ENCODE measurements at regions of chr3 and their contacts with region 1.

Region 1: GRCh38 chr3:141738022-141738890 is at the start of gene RNF7:
- DNase-seq: peak; percentile 96
- ATAC-seq: peak; percentile 97
- total RNA-seq, gene RNF7: 82.6 TPM

Region 2: DNA sequence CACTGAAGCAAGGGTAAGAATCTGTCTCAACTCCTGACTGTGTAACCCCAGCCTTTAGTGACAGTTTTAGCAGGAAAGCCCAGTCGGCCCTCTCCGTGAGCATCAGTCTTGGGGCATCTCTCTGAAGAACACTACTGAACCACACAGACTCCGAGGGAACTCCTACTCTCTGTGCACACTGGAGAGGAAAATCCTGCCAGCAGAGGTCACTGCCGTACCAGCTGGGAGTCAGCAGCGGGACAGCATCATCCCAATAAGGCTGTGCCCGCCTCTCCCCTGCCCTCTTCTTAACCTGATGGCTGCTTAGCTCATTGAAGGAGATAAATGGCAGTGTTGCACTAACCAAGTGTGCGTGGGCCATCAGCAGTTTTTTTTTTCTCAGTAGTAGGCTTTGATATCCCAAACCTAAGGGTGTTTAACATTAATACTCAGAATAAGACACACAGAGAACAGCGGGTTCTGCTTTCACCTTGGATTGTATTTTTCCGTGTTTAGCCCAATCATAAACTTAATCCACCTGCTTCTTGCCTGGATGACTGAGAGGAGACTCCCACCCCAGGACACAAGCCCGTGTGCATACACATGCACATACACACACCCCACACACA is 278.1 kb before region 1 on chr3:
- intact Hi-C with region 1: no loop called
- DNase-seq: peak; percentile 92
- ATAC-seq: peak; percentile 95

Region 3: GRCh38 chr3:141575879-141576743 is 162.1 kb before region 1 on chr3:
- intact Hi-C with region 1: loop called (anchors 10 kb)
- DNase-seq: no peak
- ATAC-seq: no peak

Region 4: GRCh38 chr3:141659821-141660613 is 78.2 kb before region 1 on chr3:
- intact Hi-C with region 1: loop called (anchors 5 kb)
- DNase-seq: peak; percentile 87
- ATAC-seq: peak; percentile 90

Region 5: GRCh38 chr3:141796081-141796888 is 58.0 kb after region 1 on chr3:
- intact Hi-C with region 1: loop called (anchors 5 kb)
- DNase-seq: peak; percentile 82
- ATAC-seq: peak; percentile 80

Region 6: DNA sequence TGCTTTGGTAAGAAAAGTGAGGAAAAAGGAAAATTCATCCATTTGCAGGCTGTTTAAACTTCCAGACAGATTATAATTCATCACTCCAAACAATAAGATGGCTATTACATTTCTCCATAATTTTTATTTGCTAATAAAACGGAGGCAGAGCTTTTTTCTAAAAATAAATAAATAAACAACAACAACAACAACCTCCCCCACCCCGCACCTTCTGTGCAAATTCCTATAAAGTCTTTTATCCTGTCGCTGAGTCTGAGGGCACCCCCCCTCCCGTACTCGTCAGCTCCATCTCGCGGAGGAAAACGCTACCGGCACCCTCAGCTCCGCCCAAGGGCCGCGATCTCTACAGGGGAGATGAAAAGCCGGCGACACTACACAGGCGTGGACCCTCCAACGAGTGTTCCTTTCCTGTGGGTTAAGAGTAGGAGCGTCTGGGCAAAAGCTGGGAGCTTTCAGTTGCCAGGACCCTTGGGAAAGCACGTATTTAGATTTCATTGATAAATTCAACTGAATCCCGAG is 137.2 kb after region 1 on chr3:
- intact Hi-C with region 1: loop called (anchors 1 kb)
- DNase-seq: peak; percentile 92
- ATAC-seq: peak; percentile 92

Region 7: GRCh38 chr3:141913150-141913811 is 175.0 kb after region 1 on chr3:
- intact Hi-C with region 1: loop called (anchors 1 kb)
- DNase-seq: no peak
- ATAC-seq: peak; percentile 65

Measured in Right ventricle myocardium inferior (tissue), 1 donor.